ENCODE measurements at regions of chr7 and their contacts with region 1.

Region 1: DNA sequence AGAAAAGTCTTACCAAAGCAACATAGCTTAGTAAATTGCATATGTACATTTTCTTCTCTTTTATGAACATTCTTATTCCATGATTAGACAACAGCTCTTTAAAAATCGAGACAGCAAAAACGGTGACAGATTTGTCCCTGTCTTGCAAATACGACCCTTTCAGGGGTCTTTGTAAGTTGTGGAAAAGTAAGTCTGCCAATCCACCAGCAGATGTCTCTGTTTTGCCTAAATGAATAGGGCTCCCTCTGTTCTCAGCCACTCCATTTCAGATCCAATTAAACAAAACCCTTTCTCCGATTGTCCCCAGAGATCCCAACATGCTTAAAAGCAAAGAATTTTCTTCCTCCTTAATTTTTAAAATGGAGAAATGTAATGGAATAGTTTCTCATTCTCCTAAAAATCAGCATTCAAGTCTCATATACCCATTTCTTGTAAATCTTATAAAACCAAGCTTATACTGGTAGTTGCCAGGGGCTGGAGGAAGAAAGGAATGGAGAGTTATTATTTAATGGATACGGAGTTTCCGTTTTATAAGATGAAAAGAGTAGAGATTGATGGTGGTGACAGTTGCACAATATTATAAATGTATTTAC is 61.0 kb upstream of the NFE2L3 start:
- DNase-seq: peak; percentile 11
- H3K4me3 ChIP-seq: no peak overlapping the region
- H3K27me3 ChIP-seq: 0 out of 2 replicates have a peak, but pooled peaks cover 1% of the 10 kb centered on the region
- CTCF ChIP-seq: peak; percentile 70

Region 2: GRCh38 chr7:26105236-26105635 is 14.2 kb after region 1 on chr7:
- CTCF ChIA-PET with region 1: interaction called, 11 read pairs
- POLR2A ChIA-PET with region 1: no interaction called
- DNase-seq: no peak
- H3K4me3 ChIP-seq: no peak overlapping the region
- H3K27me3 ChIP-seq: no peaks in the 10 kb centered on the region; the same call in 1 of the 2 replicates
- CTCF ChIP-seq: no peak

Region 3: GRCh38 chr7:26187380-26188205 is 96.6 kb after region 1 on chr7:
- CTCF ChIA-PET with region 1: interaction called, 10 read pairs
- POLR2A ChIA-PET with region 1: no interaction called
- DNase-seq: no peak
- H3K4me3 ChIP-seq: no peak overlapping the region
- H3K27me3 ChIP-seq: no peaks in the 10 kb centered on the region
- CTCF ChIP-seq: no peak

Region 4: GRCh38 chr7:26200444-26201246 is 109.6 kb after region 1 on chr7 and contains the start of gene HNRNPA2B1:
- CTCF ChIA-PET with region 1: interaction called, 55 read pairs
- POLR2A ChIA-PET with region 1: no interaction called
- DNase-seq: peak; percentile 89
- H3K4me3 ChIP-seq: peak within 1 kb of the TSS; percentile 98
- H3K27me3 ChIP-seq: no peaks in the 10 kb centered on the region
- CTCF ChIP-seq: 0 out of 2 replicates have a peak, but pooled peaks have one; percentile 8
- polyA plus RNA-seq, gene HNRNPA2B1: 139 and 249 TPM in 2 replicates

Region 5: GRCh38 chr7:26284995-26285632 is 194.1 kb after region 1 on chr7:
- CTCF ChIA-PET with region 1: interaction called, 20 read pairs
- POLR2A ChIA-PET with region 1: no interaction called
- DNase-seq: no peak
- H3K4me3 ChIP-seq: no peak overlapping the region
- H3K27me3 ChIP-seq: no peaks in the 10 kb centered on the region
- CTCF ChIP-seq: 0 out of 2 replicates have a peak, but pooled peaks have one; percentile 11

Region 6: GRCh38 chr7:26729150-26729775 is 638.2 kb after region 1 on chr7:
- CTCF ChIA-PET with region 1: no interaction called
- POLR2A ChIA-PET with region 1: no interaction called
- DNase-seq: no peak
- H3K4me3 ChIP-seq: no peak overlapping the region
- H3K27me3 ChIP-seq: no peaks in the 10 kb centered on the region
- CTCF ChIP-seq: no peak

Measured in BJ (cell line).